Activated naive CD4-positive, alpha-beta T cell treated with anti-CD3 and anti-CD28 coated beads, Interleukin-2, amount 10 ng/mL, durations not matched to agents 7 days and 5 days (primary cell): ENCODE measurements at regions of chr14 and their contacts with region 1.

Region 1: GRCh38 chr14:32252030-32252670 is 49.1 kb upstream of the RNU6-8 start:
- DNase-seq: peak; percentile 62
- H3K4me3 Mint-ChIP-seq: no peak overlapping the region
- H3K27ac Mint-ChIP-seq: no peak overlapping the region
- H3K4me1 Mint-ChIP-seq: no peaks in the 10 kb centered on the region
- H3K27me3 Mint-ChIP-seq: no peaks in the 10 kb centered on the region

Region 2: DNA sequence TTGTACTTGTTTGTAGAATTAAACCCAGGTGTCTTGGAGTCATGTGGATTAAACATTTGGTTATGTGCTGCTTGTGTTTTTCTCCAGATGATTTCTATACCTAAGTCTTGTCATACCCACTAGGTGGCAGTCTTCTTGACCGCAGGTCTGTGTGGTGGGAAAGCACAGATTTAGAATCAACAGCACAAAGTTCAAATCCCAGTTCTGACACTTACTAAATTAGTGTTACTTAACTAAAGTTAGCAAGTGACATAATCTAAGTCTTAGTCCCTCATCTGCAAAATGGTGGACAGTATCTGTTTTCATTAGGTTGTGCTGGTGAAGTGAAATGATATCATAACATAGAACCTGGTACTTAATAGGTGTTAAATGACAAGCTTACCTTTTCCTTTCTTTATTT is 326.0 kb before region 1 on chr14:
- CTCF ChIA-PET with region 1: interaction called, 68 read pairs
- DNase-seq: peak; percentile 33
- H3K4me3 Mint-ChIP-seq: no peak overlapping the region
- H3K27ac Mint-ChIP-seq: no peak overlapping the region
- H3K4me1 Mint-ChIP-seq: peaks cover 9% of the 10 kb centered on the region
- H3K27me3 Mint-ChIP-seq: peaks cover 5% of the 10 kb centered on the region

Region 3: GRCh38 chr14:31934767-31935266 is 317.3 kb before region 1 on chr14:
- CTCF ChIA-PET with region 1: interaction called, 44 read pairs
- DNase-seq: peak; percentile 47
- H3K4me3 Mint-ChIP-seq: no peak overlapping the region
- H3K27ac Mint-ChIP-seq: no peak overlapping the region
- H3K4me1 Mint-ChIP-seq: peaks cover 20% of the 10 kb centered on the region
- H3K27me3 Mint-ChIP-seq: peaks cover 4% of the 10 kb centered on the region

Region 4: GRCh38 chr14:32073537-32074189 is 178.5 kb before region 1 on chr14:
- CTCF ChIA-PET with region 1: interaction called, 143 read pairs
- DNase-seq: peak; percentile 63
- H3K4me3 Mint-ChIP-seq: no peak overlapping the region
- H3K27ac Mint-ChIP-seq: no peak overlapping the region
- H3K4me1 Mint-ChIP-seq: peaks cover 15% of the 10 kb centered on the region
- H3K27me3 Mint-ChIP-seq: peaks cover 16% of the 10 kb centered on the region

Region 5: DNA sequence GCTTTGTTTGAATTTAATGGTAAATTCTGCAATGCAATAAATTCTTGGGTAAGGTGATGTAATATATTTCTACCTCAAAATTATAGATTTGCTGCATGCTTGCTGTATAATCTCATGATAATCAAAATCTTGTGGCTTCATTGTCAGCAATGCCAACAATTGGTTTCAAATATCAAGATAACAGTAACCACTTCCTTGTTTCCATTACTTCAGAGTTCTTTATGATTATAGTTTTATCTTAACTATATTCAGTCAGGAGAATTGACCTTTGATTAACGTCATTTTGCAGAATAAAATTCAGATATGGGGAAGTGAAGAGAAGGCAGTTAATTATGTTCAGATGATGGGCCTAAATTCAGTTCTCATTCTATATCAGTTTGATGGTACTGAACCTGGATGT is 18.9 kb before region 1 on chr14:
- CTCF ChIA-PET with region 1: no interaction called
- DNase-seq: no peak
- H3K4me3 Mint-ChIP-seq: no peak overlapping the region
- H3K27ac Mint-ChIP-seq: no peak overlapping the region
- H3K4me1 Mint-ChIP-seq: peaks cover 5% of the 10 kb centered on the region
- H3K27me3 Mint-ChIP-seq: no peaks in the 10 kb centered on the region

Region 6: GRCh38 chr14:32469388-32470160 is 217.4 kb after region 1 on chr14:
- CTCF ChIA-PET with region 1: interaction called, 20 read pairs
- DNase-seq: no peak
- H3K4me3 Mint-ChIP-seq: no peak overlapping the region
- H3K27ac Mint-ChIP-seq: no peak overlapping the region
- H3K4me1 Mint-ChIP-seq: no peaks in the 10 kb centered on the region
- H3K27me3 Mint-ChIP-seq: no peaks in the 10 kb centered on the region